Aorta (tissue), 5 donors: ENCODE measurements at regions of chr2 and their contacts with region 1.

Region 1: DNA sequence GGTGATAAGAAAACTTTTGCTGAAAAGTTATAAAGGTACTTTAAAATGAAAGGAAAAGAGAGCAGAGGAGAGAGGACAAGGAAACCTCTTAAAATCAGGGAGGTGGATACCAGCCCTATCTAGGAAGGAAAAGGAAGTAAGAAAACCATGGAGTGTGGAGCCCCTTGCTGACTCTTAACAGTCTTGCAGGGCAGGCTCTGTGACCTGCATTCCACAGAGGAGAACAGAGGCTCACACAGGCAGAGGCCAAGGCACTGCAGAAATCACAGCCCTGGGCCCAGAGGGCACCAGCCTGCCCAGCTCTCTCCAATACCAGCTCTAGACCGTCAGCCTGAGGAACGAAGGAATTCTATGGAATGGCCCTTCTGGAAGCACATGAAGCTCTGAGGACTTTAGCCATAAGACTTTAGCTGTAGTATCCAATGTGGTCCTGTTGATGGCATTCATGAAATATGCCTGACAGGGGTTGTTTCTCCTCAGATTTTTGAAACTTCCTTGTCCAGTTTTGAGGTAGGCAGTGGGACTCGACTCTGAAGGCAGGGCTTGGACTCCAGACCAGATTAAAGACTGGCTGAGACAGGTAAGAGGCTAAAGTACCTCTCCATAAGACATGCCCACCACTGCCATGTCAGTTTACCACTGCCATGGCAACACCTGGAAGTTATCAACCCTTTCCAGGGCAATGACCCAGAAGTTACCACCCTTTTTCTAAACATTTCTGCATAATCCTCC is 216.3 kb downstream of the ANAPC1 start:
- DNase-seq: no peak
- ATAC-seq: peak; percentile 74
- H3K4me3 ChIP-seq: no peak overlapping the region
- H3K27ac ChIP-seq: no peak overlapping the region
- H3K4me1 ChIP-seq: no peaks in the 10 kb centered on the region
- H3K27me3 ChIP-seq: no peaks in the 10 kb centered on the region

Region 2: GRCh38 chr2:110812726-110813645 is 854.7 kb before region 1 on chr2:
- intact Hi-C with region 1: loop called in 1 of 2 experiments (anchors 5 kb)
- DNase-seq: no peak
- ATAC-seq: no peak
- H3K4me3 ChIP-seq: no peak overlapping the region
- H3K27ac ChIP-seq: no peak overlapping the region
- H3K4me1 ChIP-seq: no peaks in the 10 kb centered on the region
- H3K27me3 ChIP-seq: no peaks in the 10 kb centered on the region

Region 3: DNA sequence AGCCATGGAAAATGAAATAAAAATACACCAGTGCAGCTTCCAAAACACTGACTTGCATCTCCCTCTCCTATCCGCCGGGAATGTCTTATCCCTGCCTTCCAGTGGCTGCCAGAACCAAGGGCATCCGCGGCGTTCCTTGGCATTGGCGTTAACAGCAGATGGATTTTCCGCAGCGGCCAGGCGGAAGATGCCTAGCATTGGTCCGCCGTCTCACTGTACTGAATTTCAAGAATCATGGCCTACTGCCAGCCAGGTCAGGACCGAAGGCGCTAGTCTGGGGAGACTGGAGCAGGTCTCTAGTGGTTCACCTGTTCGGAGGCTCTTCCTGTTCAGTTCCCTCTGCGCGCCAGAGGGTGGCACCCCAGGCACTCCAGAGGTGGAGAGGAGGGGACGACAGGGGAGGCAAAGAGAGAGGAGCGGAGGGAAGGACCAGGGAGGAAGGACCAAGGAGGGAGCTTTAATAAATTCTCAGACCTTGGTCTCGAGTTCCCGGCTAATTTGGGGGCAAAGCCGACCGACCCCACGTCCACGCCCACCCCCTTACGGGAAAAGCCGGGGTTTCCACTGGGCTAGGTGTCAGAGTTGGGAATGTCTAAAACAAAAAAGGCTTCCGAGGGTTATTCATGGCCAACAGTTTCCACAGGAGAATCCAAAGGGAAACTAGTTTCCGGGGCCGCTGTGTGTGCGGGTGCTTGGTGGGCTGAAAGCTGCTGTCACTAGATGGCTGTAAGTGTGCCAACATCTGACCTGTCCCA is 550.7 kb before region 1 on chr2:
- intact Hi-C with region 1: loop called (anchors 2 to 5 kb)
- DNase-seq: peak; percentile 79 to 89
- ATAC-seq: peak; percentile 75
- H3K4me3 ChIP-seq: peak overlapping the region in 1 of 2 donors; percentile 12
- H3K27ac ChIP-seq: no peak overlapping the region
- H3K4me1 ChIP-seq: no peaks in the 10 kb centered on the region
- H3K27me3 ChIP-seq: peaks cover 0 to 2% of the 10 kb centered on the region in 2 donors